MCF 10A (cell line): ENCODE measurements at regions of chr11 and their contacts with region 1.

Region 1: GRCh38 chr11:102810945-102811660 is 13.1 kb upstream of the MMP1 start:
- DNase-seq: peak; percentile 55
- H3K4me3 Mint-ChIP-seq: no peak overlapping the region
- H3K27ac Mint-ChIP-seq: no peak overlapping the region
- H3K4me1 Mint-ChIP-seq: peaks cover 17% of the 10 kb centered on the region
- H3K27me3 Mint-ChIP-seq: no peaks in the 10 kb centered on the region
- CTCF ChIP-seq: peak; percentile 62

Region 2: GRCh38 chr11:102640946-102641345 is 170.2 kb before region 1 on chr11:
- CTCF ChIA-PET with region 1: no interaction called
- POLR2A ChIA-PET with region 1: no interaction called
- intact Hi-C with region 1: no loop called
- DNase-seq: no peak
- H3K4me3 Mint-ChIP-seq: no peak overlapping the region
- H3K27ac Mint-ChIP-seq: no peak overlapping the region
- H3K4me1 Mint-ChIP-seq: no peaks in the 10 kb centered on the region
- H3K27me3 Mint-ChIP-seq: no peaks in the 10 kb centered on the region
- CTCF ChIP-seq: no peak

Region 3: DNA sequence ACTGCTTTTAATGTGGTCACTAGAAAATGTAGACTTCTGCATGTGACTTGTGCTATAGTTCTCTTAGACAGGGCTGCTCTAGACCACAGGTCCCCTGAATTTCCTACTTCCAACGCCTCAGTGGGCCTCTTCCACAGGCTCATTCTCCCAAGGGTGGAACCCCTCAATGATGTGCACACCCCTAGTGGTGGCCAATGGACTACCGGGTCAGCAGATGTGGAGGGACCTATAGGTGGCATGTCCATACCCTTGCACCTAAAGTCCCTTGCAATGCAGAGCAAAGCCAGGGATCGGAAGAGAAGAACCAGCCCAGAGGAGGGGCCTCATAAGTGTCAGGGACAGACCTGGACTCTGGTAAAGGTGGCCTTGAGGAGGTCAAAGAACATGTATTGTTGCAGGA is 124.4 kb after region 1 on chr11:
- CTCF ChIA-PET with region 1: interaction called, 77 read pairs
- POLR2A ChIA-PET with region 1: interaction called, 4 read pairs
- intact Hi-C with region 1: no loop called
- DNase-seq: no peak
- H3K4me3 Mint-ChIP-seq: no peak overlapping the region
- H3K27ac Mint-ChIP-seq: no peak overlapping the region
- H3K4me1 Mint-ChIP-seq: no peaks in the 10 kb centered on the region
- H3K27me3 Mint-ChIP-seq: no peaks in the 10 kb centered on the region
- CTCF ChIP-seq: no peak

Region 4: DNA sequence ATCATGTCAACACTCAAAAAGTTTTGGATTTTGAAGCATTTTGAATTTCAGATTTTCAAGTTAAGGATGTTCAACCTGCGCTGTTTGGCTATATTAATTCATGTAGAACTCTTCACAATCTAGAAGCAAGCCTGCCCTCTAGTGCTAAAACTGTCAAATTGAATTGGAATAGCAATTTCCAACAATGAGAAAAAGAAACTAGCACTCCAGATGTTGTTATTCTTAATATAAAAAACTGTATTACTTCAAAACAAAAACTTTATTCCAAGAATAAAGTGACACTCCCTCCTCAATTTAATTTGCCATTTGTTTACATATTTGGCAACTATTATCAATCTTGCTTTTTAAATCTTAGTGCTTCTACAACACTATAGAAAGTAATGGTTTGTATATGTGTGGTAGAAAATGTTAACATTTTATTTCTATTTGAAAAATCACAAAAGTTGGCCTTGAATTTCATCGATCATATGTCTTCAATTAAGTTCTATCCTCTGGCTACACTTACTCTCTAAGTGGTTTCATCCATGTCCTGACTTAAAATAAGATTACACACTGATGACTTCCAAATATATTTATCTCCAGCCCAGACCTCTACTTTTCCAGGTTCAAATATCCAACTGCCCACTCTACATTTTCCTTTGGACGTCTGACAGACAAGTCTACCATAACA is 244.3 kb after region 1 on chr11:
- CTCF ChIA-PET with region 1: interaction called, 3 read pairs
- POLR2A ChIA-PET with region 1: no interaction called
- intact Hi-C with region 1: loop called (anchors 1 kb)
- DNase-seq: peak; percentile 42
- H3K4me3 Mint-ChIP-seq: no peak overlapping the region
- H3K27ac Mint-ChIP-seq: no peak overlapping the region
- H3K4me1 Mint-ChIP-seq: no peaks in the 10 kb centered on the region
- H3K27me3 Mint-ChIP-seq: no peaks in the 10 kb centered on the region
- CTCF ChIP-seq: peak; percentile 36